ENCODE measurements at regions of chr14 and their contacts with region 1.

Region 1: DNA sequence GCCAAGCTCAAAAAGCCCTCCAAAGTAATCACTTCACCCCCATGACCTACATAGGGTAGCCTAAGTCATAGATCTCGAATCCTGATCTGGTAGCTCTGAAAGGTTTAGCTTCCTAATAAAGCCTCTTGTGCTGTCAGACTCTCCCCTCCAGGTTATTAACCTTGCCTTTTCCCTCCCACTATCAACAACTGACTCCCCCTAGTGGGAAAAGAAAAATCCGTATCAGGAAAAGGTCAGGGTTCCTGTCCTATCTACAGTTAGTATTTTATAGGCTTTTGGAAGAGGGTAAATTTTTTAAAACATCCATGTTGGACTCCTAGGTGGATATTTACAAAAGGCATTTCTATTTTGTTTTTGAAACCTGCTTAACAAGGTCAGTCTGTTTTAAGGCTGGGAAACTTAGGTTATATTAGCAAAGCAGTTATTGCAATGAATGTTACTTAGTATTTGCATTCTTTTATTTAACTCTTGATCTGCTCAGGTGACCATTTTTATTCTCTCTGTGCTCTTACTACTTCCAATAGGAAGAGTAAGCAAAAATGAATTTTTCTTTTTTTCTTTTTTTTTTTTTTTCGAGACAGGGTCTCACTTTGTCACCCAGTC is 8.0 kb downstream of the YY1 start:
- DNase-seq: no peak
- H3K4me3 ChIP-seq: no peak overlapping the region
- H3K27ac ChIP-seq: no peak overlapping the region
- H3K4me1 ChIP-seq: peaks cover 4 to 8% (median 5%) of the 10 kb centered on the region in 4 experiments
- H3K27me3 ChIP-seq: no peaks in the 10 kb centered on the region
- CTCF ChIP-seq: peak in 2 of 3 experiments; percentile 45 to 56; a peak in 2 of 4 replicates
- EP300 ChIP-seq: no peak
- POLR2A ChIP-seq: no peak
- RAD21 ChIP-seq: peak in 1 of 2 experiments; percentile 28; a peak in 3 of 4 replicates

Region 2: DNA sequence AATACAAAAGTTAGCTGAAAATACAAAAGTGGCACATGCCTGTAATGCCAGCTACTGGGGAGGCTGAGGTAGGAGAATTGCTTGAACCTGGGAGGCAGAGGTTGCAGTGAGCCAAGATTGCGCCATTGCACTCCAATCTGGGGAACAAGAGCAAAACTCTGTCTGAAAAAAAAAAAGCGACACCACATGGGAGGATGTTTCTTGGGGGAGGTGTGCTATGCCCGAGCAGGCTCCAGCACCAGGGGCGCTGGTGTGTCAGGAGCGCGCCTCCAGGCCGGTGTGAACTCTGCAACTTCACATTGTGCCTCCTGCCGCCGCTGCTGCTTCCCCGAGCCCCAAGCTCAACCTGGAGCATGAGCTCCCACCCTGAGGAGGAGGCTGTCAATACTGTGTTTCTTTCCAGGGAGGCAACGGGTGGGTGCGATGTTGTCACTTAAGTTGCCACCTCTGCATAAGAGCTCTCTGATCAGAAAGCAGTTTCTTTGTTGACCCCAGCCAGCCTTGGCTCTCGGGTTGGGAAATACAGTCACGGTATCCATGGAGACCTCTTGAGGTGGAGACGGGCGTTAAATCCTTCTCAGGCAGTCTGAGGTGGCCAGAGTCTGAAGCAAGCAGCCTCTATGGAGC is 106.4 kb before region 1 on chr14:
- CTCF ChIA-PET with region 1: no interaction called
- POLR2A ChIA-PET with region 1: no interaction called
- DNase-seq: peak; percentile 58 to 78
- H3K4me3 ChIP-seq: no peak overlapping the region
- H3K27ac ChIP-seq: no peak overlapping the region; the same call in 1 of the 2 replicates
- H3K4me1 ChIP-seq: peaks cover 0 to 6% (median 5%) of the 10 kb centered on the region in 4 experiments; a peak in 5 of 7 replicates
- H3K27me3 ChIP-seq: no peaks in the 10 kb centered on the region; a peak in 1 of 7 replicates
- CTCF ChIP-seq: peak in 2 of 3 experiments; percentile 73 to 78; a peak in 3 of 4 replicates
- EP300 ChIP-seq: no peak
- POLR2A ChIP-seq: no peak
- RAD21 ChIP-seq: peak; percentile 56 to 70

Region 3: DNA sequence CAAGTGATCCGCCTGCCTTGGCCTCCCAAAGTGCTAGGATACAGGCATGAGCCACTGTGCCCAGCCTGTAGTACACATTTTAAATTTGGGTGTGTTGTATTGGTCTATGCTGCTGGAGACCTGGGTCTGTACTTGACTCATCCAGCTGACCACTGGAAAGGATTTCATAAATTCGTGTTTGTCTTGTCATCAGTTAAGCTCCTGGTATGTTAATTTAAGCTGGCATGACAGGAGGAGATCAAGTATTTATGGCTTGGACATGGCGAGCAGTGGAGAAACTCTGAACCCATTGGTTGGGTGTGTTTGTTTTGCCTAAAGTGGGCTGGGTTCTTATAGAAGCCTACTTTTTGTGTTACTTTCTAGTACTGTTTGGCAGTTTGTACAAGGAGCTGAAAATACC is 16.2 kb after region 1 on chr14:
- CTCF ChIA-PET with region 1: interaction called, 15 read pairs
- POLR2A ChIA-PET with region 1: interaction called, 3 read pairs
- DNase-seq: no peak
- H3K4me3 ChIP-seq: no peak overlapping the region
- H3K27ac ChIP-seq: no peak overlapping the region
- H3K4me1 ChIP-seq: peaks cover 0 to 4% (median 0%) of the 10 kb centered on the region in 4 experiments; a peak in 1 of 7 replicates
- H3K27me3 ChIP-seq: no peaks in the 10 kb centered on the region
- CTCF ChIP-seq: no peak
- EP300 ChIP-seq: no peak
- POLR2A ChIP-seq: no peak
- RAD21 ChIP-seq: no peak

Measured in H1 (cell line).